Activated CD4-positive, alpha-beta T cell treated with anti-CD3 and anti-CD28 coated beads for 36 hours (primary cell): ENCODE measurements at regions of chr3 and their contacts with region 1.

Region 1: GRCh38 chr3:122468896-122469533 is 45.7 kb downstream of the KPNA1 start:
- DNase-seq: no peak
- ATAC-seq: no peak
- H3K4me3 Mint-ChIP-seq: no peak overlapping the region
- H3K27ac Mint-ChIP-seq: no peak overlapping the region
- H3K4me1 Mint-ChIP-seq: peaks cover 57% of the 10 kb centered on the region
- H3K27me3 Mint-ChIP-seq: no peaks in the 10 kb centered on the region

Region 2: GRCh38 chr3:122508135-122508914 is 39.3 kb after region 1 on chr3:
- CTCF ChIA-PET with region 1: no interaction called
- POLR2A ChIA-PET with region 1: no interaction called
- intact Hi-C with region 1: loop called in 1 of 2 experiments (anchors 5 kb)
- DNase-seq: no peak
- ATAC-seq: peak; percentile 83
- H3K4me3 Mint-ChIP-seq: no peak overlapping the region
- H3K27ac Mint-ChIP-seq: peak overlapping the region; percentile 61
- H3K4me1 Mint-ChIP-seq: peaks cover 72% of the 10 kb centered on the region
- H3K27me3 Mint-ChIP-seq: no peaks in the 10 kb centered on the region

Region 3: GRCh38 chr3:123688241-123688747 is 1219.3 kb after region 1 on chr3:
- CTCF ChIA-PET with region 1: no interaction called
- POLR2A ChIA-PET with region 1: no interaction called
- intact Hi-C with region 1: no loop called
- DNase-seq: no peak
- ATAC-seq: no peak
- H3K4me3 Mint-ChIP-seq: no peak overlapping the region
- H3K27ac Mint-ChIP-seq: no peak overlapping the region
- H3K4me1 Mint-ChIP-seq: no peaks in the 10 kb centered on the region
- H3K27me3 Mint-ChIP-seq: peaks cover 4% of the 10 kb centered on the region